Transverse colon (tissue), 4 donors: ENCODE measurements at regions of chr16 and their contacts with region 1.

Region 1: GRCh38 chr16:86554917-86555703 is at the start of gene MTHFSD:
- DNase-seq: peak; percentile 95
- H3K4me3 ChIP-seq: peak within 1 kb of the TSS; percentile 76 to 96 (median 84)
- H3K27ac ChIP-seq: peak within 1 kb of the TSS; percentile 86 to 95 (median 88)
- H3K4me1 ChIP-seq: peaks cover 4 to 16% (median 12%) of the 10 kb centered on the region in 4 donors
- H3K27me3 ChIP-seq: peaks cover 11% of the 10 kb centered on the region
- CTCF ChIP-seq: peak in 1 of 5 experiments; percentile 6
- EP300 ChIP-seq: no peak
- POLR2A ChIP-seq: peak; percentile 68
- total RNA-seq, gene MTHFSD: 25.4 to 51.1 (median 30.0) TPM

Region 2: DNA sequence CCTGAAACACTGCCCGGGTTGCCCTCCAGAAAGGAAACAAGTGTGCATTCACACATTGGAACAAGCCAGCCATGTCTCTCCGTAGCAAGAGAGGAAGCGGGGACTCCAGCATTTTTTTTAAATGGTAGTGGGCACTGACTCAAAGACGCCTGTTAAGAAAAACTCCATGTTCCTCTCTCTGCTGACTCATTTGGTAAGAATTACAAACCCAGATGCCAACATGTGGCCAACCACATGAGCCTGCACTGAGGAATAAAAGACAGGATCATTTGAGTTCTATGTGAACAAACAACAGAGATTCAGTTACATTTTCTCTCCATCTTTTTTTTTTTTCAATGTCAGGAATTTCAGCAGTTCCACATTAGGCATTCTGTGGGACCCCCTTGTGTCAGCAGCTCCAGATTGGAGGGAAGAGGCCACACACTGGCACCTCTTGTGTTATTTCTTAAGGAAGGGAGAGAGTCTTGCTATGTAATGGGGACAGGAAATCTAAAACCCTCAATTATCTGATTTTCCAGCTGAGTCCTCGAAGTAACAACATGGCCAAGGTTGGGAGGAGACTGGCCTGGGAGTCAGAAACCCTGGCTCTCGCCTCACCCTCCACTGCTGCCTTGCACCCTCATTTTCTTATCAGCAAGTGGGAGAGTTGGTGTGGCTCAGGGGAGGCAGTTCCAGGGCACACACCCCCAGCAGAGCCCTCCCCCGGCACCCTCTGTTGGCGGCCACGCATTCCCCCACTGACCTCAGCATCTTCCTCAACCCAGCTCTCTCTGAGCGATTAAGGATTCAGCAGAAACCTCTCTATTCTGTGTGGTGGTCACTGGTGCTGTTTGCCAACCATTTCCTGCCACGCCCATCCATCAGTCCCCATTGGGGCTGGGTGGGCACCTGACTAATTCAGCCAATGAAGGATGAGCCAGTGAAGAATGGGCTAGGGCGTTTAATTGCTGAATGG is 196.2 kb after region 1 on chr16:
- in situ Hi-C with region 1: no loop called
- intact Hi-C with region 1: no loop called
- DNase-seq: no peak
- H3K4me3 ChIP-seq: no peak overlapping the region
- H3K27ac ChIP-seq: no peak overlapping the region
- H3K4me1 ChIP-seq: no peaks in the 10 kb centered on the region
- H3K27me3 ChIP-seq: peaks cover 7% of the 10 kb centered on the region
- CTCF ChIP-seq: no peak
- EP300 ChIP-seq: no peak
- POLR2A ChIP-seq: no peak

Region 3: GRCh38 chr16:87067836-87068761 is 513.0 kb after region 1 on chr16:
- in situ Hi-C with region 1: loop called in 2 of 4 experiments (anchors 10 kb)
- intact Hi-C with region 1: loop called (anchors 5 kb)
- DNase-seq: no peak
- H3K4me3 ChIP-seq: no peak overlapping the region
- H3K27ac ChIP-seq: no peak overlapping the region
- H3K4me1 ChIP-seq: no peaks in the 10 kb centered on the region
- H3K27me3 ChIP-seq: peaks cover 56% of the 10 kb centered on the region
- CTCF ChIP-seq: no peak
- EP300 ChIP-seq: no peak
- POLR2A ChIP-seq: no peak

Region 4: GRCh38 chr16:87076950-87077749 is 522.0 kb after region 1 on chr16:
- in situ Hi-C with region 1: loop called in 1 of 4 experiments (anchors 10 kb)
- intact Hi-C with region 1: no loop called
- DNase-seq: peak; percentile 67
- H3K4me3 ChIP-seq: no peak overlapping the region
- H3K27ac ChIP-seq: no peak overlapping the region
- H3K4me1 ChIP-seq: no peaks in the 10 kb centered on the region
- H3K27me3 ChIP-seq: peaks cover 5% of the 10 kb centered on the region
- CTCF ChIP-seq: peak; percentile 20 to 55 (median 44)
- EP300 ChIP-seq: no peak
- POLR2A ChIP-seq: no peak